Activated CD4-positive, alpha-beta T cell treated with anti-CD3 and anti-CD28 coated beads for 36 hours (primary cell): ENCODE measurements at regions of chr11 and their contacts with region 1.

Region 1: GRCh38 chr11:113796663-113797259 is 17.2 kb downstream of the CLDN25 start:
- DNase-seq: peak; percentile 24
- ATAC-seq: peak; percentile 71
- H3K4me3 Mint-ChIP-seq: no peak overlapping the region
- H3K27ac Mint-ChIP-seq: no peak overlapping the region
- H3K4me1 Mint-ChIP-seq: no peaks in the 10 kb centered on the region
- H3K27me3 Mint-ChIP-seq: no peaks in the 10 kb centered on the region

Region 2: DNA sequence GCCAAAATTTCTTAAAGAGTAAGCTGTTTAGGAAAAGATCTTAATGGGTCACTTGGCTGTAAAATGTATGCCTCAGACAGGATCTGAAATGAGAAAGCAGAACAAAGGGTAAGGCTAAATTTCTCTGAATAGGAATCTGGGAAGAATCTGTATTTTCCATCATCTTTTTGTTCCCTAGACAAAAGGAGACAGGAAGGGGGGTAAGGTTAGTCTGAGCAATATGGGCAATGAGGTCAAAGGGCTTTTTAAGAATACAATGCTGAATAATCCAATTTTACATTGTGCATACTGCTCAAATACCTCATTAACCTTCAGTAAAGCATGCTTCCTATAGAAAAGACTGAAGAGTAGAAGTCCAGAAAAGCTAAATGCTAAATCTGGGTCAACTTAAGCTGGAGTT is 17.4 kb after region 1 on chr11:
- CTCF ChIA-PET with region 1: interaction called, 13 read pairs
- POLR2A ChIA-PET with region 1: no interaction called
- intact Hi-C with region 1: no loop called
- DNase-seq: no peak
- ATAC-seq: no peak
- H3K4me3 Mint-ChIP-seq: no peak overlapping the region
- H3K27ac Mint-ChIP-seq: no peak overlapping the region
- H3K4me1 Mint-ChIP-seq: no peaks in the 10 kb centered on the region
- H3K27me3 Mint-ChIP-seq: no peaks in the 10 kb centered on the region